Heart right ventricle (tissue), 16 donors: ENCODE measurements at regions of chr17 and their contacts with region 1.

Region 1: GRCh38 chr17:18025945-18026776 is 12.8 kb downstream of the ATPAF2 start:
- DNase-seq: peak; percentile 41 to 60
- ATAC-seq: peak in 6 of 8 donors; percentile 68 to 75 (median 71)
- H3K4me3 ChIP-seq: no peak overlapping the region
- H3K27ac ChIP-seq: peak overlapping the region in 5 of 10 donors; percentile 13 to 88 (median 77)
- H3K4me1 ChIP-seq: peaks cover 0 to 37% (median 28%) of the 10 kb centered on the region in 9 donors
- H3K27me3 ChIP-seq: no peaks in the 10 kb centered on the region
- CTCF ChIP-seq: no peak

Region 2: DNA sequence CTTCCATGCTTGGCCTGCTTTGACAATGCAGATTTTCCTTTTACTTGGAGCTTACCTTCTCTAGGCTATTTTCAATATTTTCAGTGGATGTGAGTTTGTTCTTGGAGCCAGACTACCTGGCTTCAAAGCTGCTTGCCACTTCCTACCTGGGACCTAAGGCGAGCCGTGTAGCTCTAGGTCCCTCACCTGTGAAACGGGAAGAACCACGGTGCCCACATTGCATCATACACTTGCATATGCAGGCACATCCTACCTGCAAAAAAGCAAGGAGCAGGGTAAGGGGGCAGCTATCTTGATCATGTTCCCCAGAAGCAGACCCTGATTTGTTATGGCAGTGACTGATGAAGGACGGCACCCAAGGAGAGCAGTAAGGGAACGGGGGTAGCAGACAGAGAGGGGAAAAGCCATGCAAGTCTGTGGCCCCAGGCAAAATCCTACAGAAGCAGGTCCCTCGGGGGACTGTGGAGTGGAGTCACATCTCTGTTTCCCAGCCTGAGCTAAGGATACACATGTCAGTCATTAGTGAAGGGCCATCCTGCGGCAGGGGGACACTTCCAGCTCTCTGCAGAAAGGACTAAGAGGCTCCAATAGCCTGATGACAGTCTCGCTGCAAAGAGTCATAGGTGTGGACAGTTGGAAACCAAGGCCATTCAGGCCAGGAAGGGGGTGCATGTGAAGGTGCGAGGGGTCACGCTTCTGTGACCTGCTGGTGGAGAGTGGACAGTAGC is 1010.8 kb before region 1 on chr17:
- intact Hi-C with region 1: no loop called
- DNase-seq: no peak
- ATAC-seq: no peak
- H3K4me3 ChIP-seq: no peak overlapping the region
- H3K27ac ChIP-seq: no peak overlapping the region
- H3K4me1 ChIP-seq: peaks cover 0 to 16% (median 0%) of the 10 kb centered on the region in 9 donors
- H3K27me3 ChIP-seq: no peaks in the 10 kb centered on the region
- CTCF ChIP-seq: no peak

Region 3: GRCh38 chr17:17890773-17891759 is 135.1 kb before region 1 on chr17:
- intact Hi-C with region 1: loop called in 9 of 10 experiments (anchors 5 to 10 kb)
- DNase-seq: peak; percentile 38 to 42
- ATAC-seq: peak; percentile 49 to 76 (median 66)
- H3K4me3 ChIP-seq: no peak overlapping the region
- H3K27ac ChIP-seq: peak overlapping the region in 1 of 10 donors; percentile 12
- H3K4me1 ChIP-seq: peaks cover 4 to 43% (median 27%) of the 10 kb centered on the region in 9 donors
- H3K27me3 ChIP-seq: no peaks in the 10 kb centered on the region
- CTCF ChIP-seq: peak; percentile 36 to 75 (median 66)

Region 4: GRCh38 chr17:17994271-17995069 is 31.7 kb before region 1 on chr17:
- intact Hi-C with region 1: loop called in 4 of 10 experiments (anchors 5 kb)
- DNase-seq: peak; percentile 17 to 37
- ATAC-seq: peak; percentile 34 to 85 (median 78)
- H3K4me3 ChIP-seq: no peak overlapping the region
- H3K27ac ChIP-seq: no peak overlapping the region
- H3K4me1 ChIP-seq: peaks cover 0 to 9% (median 0%) of the 10 kb centered on the region in 9 donors
- H3K27me3 ChIP-seq: no peaks in the 10 kb centered on the region
- CTCF ChIP-seq: peak in 8 of 9 donors; percentile 15 to 63 (median 54)

Region 5: GRCh38 chr17:18038861-18039534 is 12.8 kb after region 1 on chr17 and contains the starts of genes ATPAF2 and GID4:
- intact Hi-C with region 1: no loop called
- DNase-seq: peak; percentile 99 to 100
- ATAC-seq: peak; percentile 96 to 99 (median 98)
- H3K4me3 ChIP-seq: peak within 1 kb of the TSS; percentile 65 to 98 (median 86)
- H3K27ac ChIP-seq: peak within 1 kb of the TSS; percentile 12 to 89 (median 85)
- H3K4me1 ChIP-seq: peaks cover 9 to 60% (median 50%) of the 10 kb centered on the region in 9 donors
- H3K27me3 ChIP-seq: no peaks in the 10 kb centered on the region
- CTCF ChIP-seq: peak in 3 of 9 donors; percentile 10 to 28 (median 22)
- total RNA-seq, gene ATPAF2: 32.6 to 43.5 (median 37.4) TPM
- total RNA-seq, gene GID4: 14.6 to 23.7 (median 17.3) TPM